Caco-2 (cell line): ENCODE measurements at regions of chr10 and their contacts with region 1.

Region 1: DNA sequence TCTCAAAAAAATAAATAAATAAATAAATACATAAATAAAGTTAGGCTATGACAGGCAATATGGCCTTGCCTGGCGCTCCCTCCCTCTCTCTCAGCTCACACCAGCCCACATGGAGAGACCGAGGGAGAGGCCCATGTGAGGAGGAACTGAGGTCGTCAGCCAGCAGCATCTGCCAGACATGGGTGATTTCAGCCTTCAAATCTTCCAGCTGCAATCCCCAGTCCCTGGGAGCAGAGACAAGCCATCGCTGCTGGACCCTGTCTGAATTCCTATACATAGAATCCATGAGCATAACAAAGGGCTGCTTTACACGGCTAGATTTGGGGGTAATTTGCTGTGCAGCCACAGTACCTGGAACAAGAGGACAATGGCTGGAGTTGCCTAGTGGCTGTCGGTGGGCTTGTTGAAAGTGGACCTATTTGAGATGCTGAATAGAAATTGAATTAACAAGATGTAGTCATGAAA is 35.6 kb downstream of the ANKRD16 start:
- DNase-seq: no peak
- H3K4me3 ChIP-seq: no peak overlapping the region
- H3K4me3 Mint-ChIP-seq: no peak overlapping the region
- H3K27ac Mint-ChIP-seq: no peak overlapping the region
- H3K4me1 ChIP-seq: no peaks in the 10 kb centered on the region
- H3K4me1 Mint-ChIP-seq: no peaks in the 10 kb centered on the region
- H3K27me3 ChIP-seq: no peaks in the 10 kb centered on the region
- H3K27me3 Mint-ChIP-seq: no peaks in the 10 kb centered on the region
- CTCF ChIP-seq: no peak

Region 2: GRCh38 chr10:5813287-5814109 is 40.6 kb before region 1 on chr10 and contains the start of gene GDI2:
- CTCF ChIA-PET with region 1: no interaction called
- POLR2A ChIA-PET with region 1: no interaction called
- intact Hi-C with region 1: no loop called
- DNase-seq: peak; percentile 99 to 100
- H3K4me3 ChIP-seq: peak within 1 kb of the TSS; percentile 90
- H3K4me3 Mint-ChIP-seq: peak within 1 kb of the TSS; percentile 91
- H3K27ac Mint-ChIP-seq: peak within 1 kb of the TSS; percentile 87
- H3K4me1 ChIP-seq: peaks cover 35% of the 10 kb centered on the region
- H3K4me1 Mint-ChIP-seq: peaks cover 28% of the 10 kb centered on the region
- H3K27me3 ChIP-seq: no peaks in the 10 kb centered on the region
- H3K27me3 Mint-ChIP-seq: no peaks in the 10 kb centered on the region
- CTCF ChIP-seq: no peak
- total RNA-seq, gene GDI2: 436 and 446 TPM in 2 replicates

Region 3: DNA sequence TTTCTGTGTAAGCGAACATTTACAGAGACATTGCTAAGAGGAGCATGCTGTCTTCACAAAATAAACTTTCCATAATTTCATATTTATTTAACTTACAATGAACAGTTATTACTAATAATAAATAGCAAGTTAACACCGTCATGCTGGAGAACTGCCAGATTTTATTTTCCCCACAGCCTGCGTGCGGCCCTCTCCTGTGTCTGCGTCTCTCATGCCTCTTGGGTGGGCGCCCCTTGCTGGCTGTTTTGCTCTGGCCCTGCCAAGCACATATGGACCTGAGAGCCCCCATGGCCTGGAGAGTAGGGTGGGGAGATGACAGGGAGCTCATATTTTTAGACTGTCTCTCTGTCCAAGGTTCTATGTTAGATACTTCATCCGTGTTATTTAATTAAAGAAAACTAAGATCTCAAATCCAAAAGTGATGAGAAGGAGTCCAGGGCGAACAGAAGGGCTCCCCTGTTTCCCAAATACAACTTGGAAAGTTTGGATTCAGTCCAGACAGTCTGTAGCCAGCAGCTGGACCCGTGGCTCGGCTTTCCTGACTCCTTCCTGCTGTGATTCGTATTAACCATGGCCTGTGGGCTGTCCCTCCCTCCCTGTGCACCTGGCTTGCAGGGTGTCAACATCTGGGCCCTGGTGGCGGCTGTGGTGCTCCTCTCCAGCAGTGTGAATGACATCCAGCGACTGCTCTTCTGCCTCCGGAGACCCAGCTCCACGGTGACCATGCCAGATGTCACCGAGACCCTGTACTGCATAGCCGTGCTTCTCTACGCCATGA is 56.4 kb after region 1 on chr10:
- CTCF ChIA-PET with region 1: no interaction called
- POLR2A ChIA-PET with region 1: no interaction called
- intact Hi-C with region 1: no loop called
- DNase-seq: no peak
- H3K4me3 ChIP-seq: no peak overlapping the region
- H3K4me3 Mint-ChIP-seq: no peak overlapping the region
- H3K27ac Mint-ChIP-seq: no peak overlapping the region
- H3K4me1 ChIP-seq: no peaks in the 10 kb centered on the region
- H3K4me1 Mint-ChIP-seq: no peaks in the 10 kb centered on the region
- H3K27me3 ChIP-seq: no peaks in the 10 kb centered on the region
- H3K27me3 Mint-ChIP-seq: no peaks in the 10 kb centered on the region
- CTCF ChIP-seq: no peak

Region 4: GRCh38 chr10:5961405-5962100 is 107.4 kb after region 1 on chr10:
- CTCF ChIA-PET with region 1: no interaction called
- POLR2A ChIA-PET with region 1: interaction called, 13 read pairs
- intact Hi-C with region 1: no loop called
- DNase-seq: peak in 1 of 2 experiments; percentile 30
- H3K4me3 ChIP-seq: no peak overlapping the region
- H3K4me3 Mint-ChIP-seq: no peak overlapping the region
- H3K27ac Mint-ChIP-seq: no peak overlapping the region
- H3K4me1 ChIP-seq: no peaks in the 10 kb centered on the region
- H3K4me1 Mint-ChIP-seq: no peaks in the 10 kb centered on the region
- H3K27me3 ChIP-seq: no peaks in the 10 kb centered on the region; the same call in 1 of the 2 replicates
- H3K27me3 Mint-ChIP-seq: no peaks in the 10 kb centered on the region
- CTCF ChIP-seq: no peak

Region 5: DNA sequence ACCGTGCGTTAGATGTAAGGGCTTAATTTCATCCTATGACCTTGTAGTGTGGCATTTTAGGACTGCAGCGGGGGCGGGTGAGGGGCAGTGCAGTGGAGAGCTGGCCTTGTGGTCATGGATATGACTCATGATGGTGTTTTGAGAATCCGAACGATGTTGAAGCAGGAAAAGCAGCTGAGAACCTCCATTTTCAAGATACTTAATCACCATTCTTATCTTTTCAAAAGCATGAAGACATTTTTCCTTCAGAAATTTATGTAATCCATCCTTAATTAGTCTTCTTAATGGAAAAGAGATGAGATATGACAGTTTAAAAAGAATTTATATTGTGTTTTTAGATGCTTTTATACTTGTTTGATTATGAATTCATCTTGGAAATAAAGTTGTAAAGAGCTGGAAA is 1943.4 kb after region 1 on chr10:
- CTCF ChIA-PET with region 1: interaction called, 10 read pairs
- POLR2A ChIA-PET with region 1: no interaction called
- intact Hi-C with region 1: no loop called
- DNase-seq: no peak
- H3K4me3 ChIP-seq: no peak overlapping the region
- H3K4me3 Mint-ChIP-seq: no peak overlapping the region
- H3K27ac Mint-ChIP-seq: peak overlapping the region; percentile 56
- H3K4me1 ChIP-seq: peaks cover 11% of the 10 kb centered on the region
- H3K4me1 Mint-ChIP-seq: peaks cover 21% of the 10 kb centered on the region
- H3K27me3 ChIP-seq: no peaks in the 10 kb centered on the region
- H3K27me3 Mint-ChIP-seq: no peaks in the 10 kb centered on the region
- CTCF ChIP-seq: no peak